ENCODE measurements at regions of chr6 and their contacts with region 1.

Region 1: GRCh38 chr6:99520855-99521632 is 5.8 kb upstream of the USP45 start:
- DNase-seq: peak; percentile 50 to 92 (median 82)

Region 2: GRCh38 chr6:99568103-99568933 is 47.3 kb after region 1 on chr6 and contains the start of gene CCNC:
- intact Hi-C with region 1: loop called (anchors 2 kb)
- DNase-seq: peak; percentile 77 to 95 (median 89)

Measured in head of caudate nucleus (tissue), 42 donors.